ENCODE measurements at regions of chr12 and their contacts with region 1.

Region 1: DNA sequence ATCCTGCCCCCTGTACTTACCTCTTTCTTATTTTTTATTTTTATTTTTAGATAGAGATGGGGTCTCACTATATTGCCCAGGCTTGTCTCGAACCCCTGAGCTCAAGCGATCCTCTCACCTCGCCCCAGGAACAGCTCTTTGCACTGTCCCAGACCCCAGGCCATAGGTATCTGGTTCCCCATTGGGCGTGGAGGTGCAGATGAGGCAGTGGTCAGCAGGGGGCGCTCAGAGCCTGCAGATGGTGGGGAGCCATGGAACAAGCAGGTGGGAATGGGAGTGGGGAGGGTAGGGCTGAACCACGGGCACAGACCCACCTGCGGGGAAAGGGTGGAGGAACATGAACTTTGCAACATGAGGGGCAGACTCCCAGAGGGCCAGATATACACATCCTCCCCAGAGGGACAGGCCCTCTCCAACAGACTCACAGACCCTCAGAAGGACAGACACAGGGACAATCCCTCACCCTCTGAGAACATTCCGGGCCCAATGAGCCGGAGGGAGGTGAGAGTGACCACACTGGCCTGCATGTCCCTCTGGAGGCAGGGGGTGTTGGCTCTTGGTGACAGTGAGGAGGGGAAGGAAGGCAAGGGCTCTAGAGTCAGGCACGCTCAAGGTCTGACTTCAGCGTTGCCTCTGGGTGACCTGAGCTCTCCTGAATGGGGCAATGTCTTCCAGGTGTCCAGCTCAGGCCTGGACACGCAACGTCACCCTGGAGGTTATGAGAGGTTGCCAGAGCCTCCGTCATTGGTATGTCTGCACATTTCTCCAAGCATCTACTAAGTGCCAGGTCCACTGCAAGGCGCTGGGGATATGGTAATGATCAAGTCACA is 34.9 kb downstream of the KRT80 start:
- DNase-seq: peak; percentile 83
- H3K4me3 ChIP-seq: no peak overlapping the region
- H3K27ac ChIP-seq: no peak overlapping the region
- H3K4me1 ChIP-seq: peaks cover 6 to 19% (median 13%) of the 10 kb centered on the region in 4 donors
- H3K27me3 ChIP-seq: peaks cover 4% of the 10 kb centered on the region
- CTCF ChIP-seq: peak; percentile 91 to 95 (median 93)
- EP300 ChIP-seq: no peak
- POLR2A ChIP-seq: no peak

Region 2: GRCh38 chr12:52278541-52279421 is 121.8 kb after region 1 on chr12:
- in situ Hi-C with region 1: no loop called
- intact Hi-C with region 1: loop called (anchors 10 kb)
- DNase-seq: peak; percentile 81
- H3K4me3 ChIP-seq: peak overlapping the region in 1 of 4 donors; percentile 37
- H3K27ac ChIP-seq: peak overlapping the region; percentile 55 to 76 (median 68)
- H3K4me1 ChIP-seq: peaks cover 4 to 23% (median 11%) of the 10 kb centered on the region in 4 donors
- H3K27me3 ChIP-seq: peaks cover 8% of the 10 kb centered on the region
- CTCF ChIP-seq: peak; percentile 72 to 99 (median 95)
- EP300 ChIP-seq: no peak
- POLR2A ChIP-seq: no peak

Region 3: DNA sequence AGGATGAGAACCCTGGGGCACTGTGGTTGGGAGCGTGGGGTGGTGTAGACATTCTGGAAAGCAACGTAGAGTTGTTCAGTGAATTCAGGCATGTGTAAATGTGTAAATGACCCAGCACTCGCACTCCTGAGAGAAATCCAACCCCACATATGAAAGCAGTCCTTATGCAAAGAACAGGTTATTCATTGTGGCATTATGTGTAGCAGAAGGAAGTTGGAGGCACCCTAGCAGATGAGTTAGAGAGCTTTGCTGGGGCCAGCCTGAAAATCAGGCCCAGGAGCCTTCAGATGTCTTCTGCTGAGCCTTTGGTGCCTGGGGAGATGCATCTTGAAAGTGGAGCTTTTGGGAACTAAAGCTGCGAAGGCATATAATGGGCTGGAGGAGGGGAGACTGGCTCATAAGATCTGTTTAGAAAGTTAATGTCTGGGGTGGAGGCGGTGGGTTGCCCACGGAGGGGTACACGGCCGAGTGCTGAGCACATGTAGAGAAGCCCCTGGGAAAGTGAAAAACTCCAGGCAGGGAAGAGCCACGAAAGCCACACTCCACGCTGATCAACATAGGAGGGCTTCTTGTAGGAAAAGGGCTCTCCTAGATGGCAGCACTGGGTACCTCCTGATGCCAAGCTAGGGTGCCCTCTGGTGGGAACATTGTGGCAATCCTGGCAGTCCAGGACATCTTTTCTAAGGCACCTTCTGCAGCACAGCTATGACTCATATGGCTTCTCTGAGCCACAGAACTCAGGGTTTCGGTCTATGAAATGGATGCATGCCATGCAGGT is 170.3 kb after region 1 on chr12:
- in situ Hi-C with region 1: no loop called
- intact Hi-C with region 1: loop called (anchors 5 kb)
- DNase-seq: peak; percentile 87
- H3K4me3 ChIP-seq: no peak overlapping the region
- H3K27ac ChIP-seq: no peak overlapping the region
- H3K4me1 ChIP-seq: no peaks in the 10 kb centered on the region
- H3K27me3 ChIP-seq: no peaks in the 10 kb centered on the region
- CTCF ChIP-seq: peak; percentile 67 to 84 (median 77)
- EP300 ChIP-seq: no peak
- POLR2A ChIP-seq: no peak

Region 4: DNA sequence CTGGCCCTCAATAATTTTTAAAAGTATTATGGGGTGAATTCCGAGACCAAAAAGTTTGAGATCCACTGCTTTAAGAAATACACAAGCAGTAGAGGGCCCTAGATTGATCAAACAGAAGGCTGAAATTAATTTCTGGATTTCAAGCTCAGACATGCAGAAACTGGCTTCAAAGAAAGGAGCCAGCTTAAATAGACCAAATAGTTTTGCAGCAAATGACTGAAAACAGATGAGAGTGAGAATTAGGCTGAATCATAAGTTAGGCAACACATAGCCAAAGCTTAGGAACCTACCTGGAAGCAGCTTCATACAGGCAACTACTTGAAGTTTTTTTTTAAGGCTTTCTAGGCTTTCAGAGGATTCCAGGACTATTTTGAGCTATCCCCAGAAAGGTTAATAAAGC is 1456.9 kb after region 1 on chr12:
- in situ Hi-C with region 1: no loop called
- intact Hi-C with region 1: no loop called
- DNase-seq: no peak
- H3K4me3 ChIP-seq: no peak overlapping the region
- H3K27ac ChIP-seq: no peak overlapping the region
- H3K4me1 ChIP-seq: peaks cover 0 to 29% (median 8%) of the 10 kb centered on the region in 4 donors
- H3K27me3 ChIP-seq: no peaks in the 10 kb centered on the region
- CTCF ChIP-seq: no peak
- EP300 ChIP-seq: no peak
- POLR2A ChIP-seq: no peak

Measured in transverse colon (tissue), 4 donors.